ENCODE measurements at regions of chr11 and their contacts with region 1.

Region 1: DNA sequence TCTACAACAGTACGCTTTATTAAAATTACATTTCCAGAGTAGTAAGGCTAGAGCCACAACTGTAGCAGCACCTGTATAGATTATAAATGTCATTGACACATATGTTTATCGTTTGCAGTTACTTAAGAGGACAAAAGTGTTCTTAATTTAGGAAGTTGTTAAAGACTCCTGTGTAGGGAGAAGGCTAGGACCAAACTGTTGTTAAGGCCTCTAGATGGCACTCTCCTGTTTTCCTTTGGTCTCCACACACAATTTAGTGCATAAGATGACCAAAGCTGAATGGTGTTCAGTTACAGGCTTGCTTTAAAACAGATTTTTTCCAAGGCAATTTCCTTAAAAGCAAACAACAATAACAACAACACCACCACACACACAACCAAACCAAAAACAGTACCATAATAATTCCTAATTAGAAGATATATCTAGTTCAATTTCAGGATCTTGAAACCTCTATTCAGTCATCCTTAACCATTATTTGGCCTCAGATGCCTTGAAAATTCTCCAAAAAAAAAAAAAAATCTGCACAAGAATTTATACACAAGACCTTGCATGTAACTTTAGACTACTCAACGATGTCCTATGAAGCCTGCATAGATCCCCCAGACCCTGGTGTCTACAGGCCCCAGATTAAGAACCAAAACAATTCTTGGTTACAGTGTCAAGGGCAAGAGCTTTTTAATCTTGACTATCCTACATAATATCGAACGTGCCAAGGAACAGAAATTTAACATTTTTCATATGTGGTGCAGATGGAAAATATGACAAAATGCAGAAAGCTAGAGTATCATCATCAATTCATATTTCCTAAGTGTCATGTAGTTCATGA is 42.6 kb upstream of the APOA1 start:
- DNase-seq: peak; percentile 31 to 61
- ATAC-seq: peak; percentile 94 to 95; a peak in 5 of 6 replicates
- H3K4me3 ChIP-seq: no peak overlapping the region
- H3K27ac ChIP-seq: no peak overlapping the region
- H3K4me1 ChIP-seq: no peaks in the 10 kb centered on the region
- CTCF ChIP-seq: peak; percentile 75
- EP300 ChIP-seq: no peak
- POLR2A ChIP-seq: no peak
- RAD21 ChIP-seq: peak; percentile 79 to 84

Region 2: DNA sequence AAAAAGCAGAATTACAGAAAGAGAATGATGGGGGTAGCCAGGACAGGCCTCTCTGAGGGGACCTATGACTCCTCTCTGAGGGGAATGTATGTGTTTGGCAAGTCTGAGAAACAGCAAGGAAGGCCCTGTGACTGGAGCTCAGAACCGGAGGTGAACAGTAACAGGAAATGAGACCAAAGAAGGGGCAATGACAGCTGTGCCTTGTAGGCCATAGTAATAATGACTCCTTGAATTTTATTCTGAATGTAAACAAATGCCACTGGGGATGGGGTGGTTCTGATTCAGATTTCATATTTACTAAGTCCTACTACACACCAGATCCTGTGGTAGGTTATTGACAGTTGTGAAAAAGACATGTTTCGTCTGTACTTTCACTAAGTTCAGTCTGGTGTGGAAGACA is 10.2 kb after region 1 on chr11:
- CTCF ChIA-PET with region 1: interaction called, 35 read pairs
- POLR2A ChIA-PET with region 1: no interaction called
- DNase-seq: no peak
- ATAC-seq: no peak
- H3K4me3 ChIP-seq: no peak overlapping the region
- H3K27ac ChIP-seq: no peak overlapping the region
- H3K4me1 ChIP-seq: no peaks in the 10 kb centered on the region
- CTCF ChIP-seq: no peak
- EP300 ChIP-seq: no peak
- POLR2A ChIP-seq: no peak
- RAD21 ChIP-seq: no peak

Region 3: GRCh38 chr11:117098269-117099232 is 218.5 kb after region 1 on chr11 and contains the start of gene SIK3:
- CTCF ChIA-PET with region 1: interaction called, 77 read pairs
- POLR2A ChIA-PET with region 1: no interaction called
- DNase-seq: peak; percentile 85 to 86
- ATAC-seq: peak; percentile 87 to 89
- H3K4me3 ChIP-seq: peak within 1 kb of the TSS; percentile 95
- H3K27ac ChIP-seq: peak within 1 kb of the TSS; percentile 99
- H3K4me1 ChIP-seq: peaks cover 41% of the 10 kb centered on the region
- CTCF ChIP-seq: no peak
- EP300 ChIP-seq: no peak
- POLR2A ChIP-seq: peak; percentile 36; the same call in 1 of the 2 replicates
- RAD21 ChIP-seq: 0 out of 5 replicates have a peak, but pooled peaks of 1 of the 2 experiments have one; percentile 32
- polyA plus RNA-seq, gene SIK3: 8.2 and 12.3 TPM in 2 replicates

Measured in A549 (cell line).